ENCODE measurements at regions of chr4 and their contacts with region 1.

Region 1: DNA sequence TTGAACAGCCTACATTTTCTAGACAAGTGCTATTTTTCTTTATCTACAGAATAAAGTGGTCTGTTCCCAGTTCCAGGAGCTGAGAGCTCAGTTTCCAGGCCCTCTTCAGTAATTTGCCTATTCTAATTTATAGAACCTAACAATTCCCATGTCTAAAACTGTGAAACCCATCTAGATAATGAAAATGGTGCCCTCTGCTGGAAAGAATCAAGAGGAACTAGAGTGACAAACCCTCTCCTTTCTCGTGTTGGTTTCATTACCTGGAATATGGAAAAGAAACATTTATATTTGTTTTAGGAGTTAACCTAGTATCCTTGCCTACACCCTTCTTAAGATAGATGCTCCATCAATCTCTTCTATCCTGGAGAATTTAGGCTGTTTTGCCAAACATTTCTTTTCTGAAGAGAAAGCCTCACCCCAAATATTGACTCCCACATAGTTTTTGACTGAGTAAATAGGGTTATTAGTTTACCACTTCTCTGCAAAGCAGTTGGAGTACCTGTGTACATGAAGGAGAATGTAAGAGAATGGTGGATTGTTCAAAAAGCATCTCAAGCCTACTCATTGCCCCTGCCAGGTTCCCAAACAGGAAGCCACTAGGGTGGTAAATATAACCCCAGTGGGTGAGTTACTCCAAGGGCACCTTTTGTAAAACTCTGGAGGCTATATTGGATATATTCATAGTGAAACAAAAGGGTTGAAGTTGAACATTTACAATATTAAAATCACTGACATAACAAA is 121.6 kb downstream of the RASL11B start:
- DNase-seq: no peak
- H3K4me3 ChIP-seq: no peak overlapping the region
- H3K27ac ChIP-seq: peak overlapping the region in 2 of 4 donors; percentile 20 to 36
- H3K4me1 ChIP-seq: peaks cover 0 to 17% (median 0%) of the 10 kb centered on the region in 3 donors
- H3K27me3 ChIP-seq: no peaks in the 10 kb centered on the region
- CTCF ChIP-seq: peak in 5 of 6 experiments; percentile 47 to 72 (median 71)
- POLR2A ChIP-seq: no peak

Region 2: GRCh38 chr4:52376132-52376704 is 607.5 kb before region 1 on chr4:
- intact Hi-C with region 1: loop called (anchors 10 kb)
- DNase-seq: no peak
- H3K4me3 ChIP-seq: no peak overlapping the region
- H3K27ac ChIP-seq: no peak overlapping the region
- H3K4me1 ChIP-seq: no peaks in the 10 kb centered on the region
- H3K27me3 ChIP-seq: no peaks in the 10 kb centered on the region
- CTCF ChIP-seq: peak; percentile 39 to 64 (median 54)
- POLR2A ChIP-seq: no peak

Region 3: GRCh38 chr4:52545099-52546069 is 438.3 kb before region 1 on chr4:
- intact Hi-C with region 1: loop called (anchors 5 kb)
- DNase-seq: no peak
- H3K4me3 ChIP-seq: no peak overlapping the region
- H3K27ac ChIP-seq: no peak overlapping the region
- H3K4me1 ChIP-seq: peaks cover 0 to 6% (median 0%) of the 10 kb centered on the region in 3 donors
- H3K27me3 ChIP-seq: peaks cover 0 to 3% (median 0%) of the 10 kb centered on the region in 4 donors
- CTCF ChIP-seq: peak; percentile 50 to 94 (median 88)
- POLR2A ChIP-seq: no peak

Region 4: GRCh38 chr4:52728691-52729240 is 255.0 kb before region 1 on chr4:
- intact Hi-C with region 1: no loop called
- DNase-seq: no peak
- H3K4me3 ChIP-seq: no peak overlapping the region
- H3K27ac ChIP-seq: no peak overlapping the region
- H3K4me1 ChIP-seq: no peaks in the 10 kb centered on the region
- H3K27me3 ChIP-seq: no peaks in the 10 kb centered on the region
- CTCF ChIP-seq: no peak
- POLR2A ChIP-seq: no peak